ENCODE measurements at regions of chr7 and their contacts with region 1.

Region 1: GRCh38 chr7:77798394-77799077 is at the starts of genes PHTF2 and TMEM60:
- DNase-seq: peak; percentile 80 to 99 (median 89)
- ATAC-seq: peak; percentile 87
- H3K4me3 ChIP-seq: peak within 1 kb of the TSS; percentile 81
- H3K4me3 Mint-ChIP-seq: peak within 1 kb of the TSS; percentile 95
- H3K27ac ChIP-seq: peak within 1 kb of the TSS; percentile 55 to 76
- H3K27ac Mint-ChIP-seq: peak within 1 kb of the TSS; percentile 87
- H3K4me1 ChIP-seq: peaks cover 23% of the 10 kb centered on the region
- H3K4me1 Mint-ChIP-seq: peaks cover 86% of the 10 kb centered on the region
- H3K27me3 ChIP-seq: no peaks in the 10 kb centered on the region
- H3K27me3 Mint-ChIP-seq: no peaks in the 10 kb centered on the region
- CTCF ChIP-seq: peak; percentile 72
- total RNA-seq, gene PHTF2: 22.6 to 23.5 TPM
- total RNA-seq, gene TMEM60: 1.2 to 2.4 TPM

Region 2: DNA sequence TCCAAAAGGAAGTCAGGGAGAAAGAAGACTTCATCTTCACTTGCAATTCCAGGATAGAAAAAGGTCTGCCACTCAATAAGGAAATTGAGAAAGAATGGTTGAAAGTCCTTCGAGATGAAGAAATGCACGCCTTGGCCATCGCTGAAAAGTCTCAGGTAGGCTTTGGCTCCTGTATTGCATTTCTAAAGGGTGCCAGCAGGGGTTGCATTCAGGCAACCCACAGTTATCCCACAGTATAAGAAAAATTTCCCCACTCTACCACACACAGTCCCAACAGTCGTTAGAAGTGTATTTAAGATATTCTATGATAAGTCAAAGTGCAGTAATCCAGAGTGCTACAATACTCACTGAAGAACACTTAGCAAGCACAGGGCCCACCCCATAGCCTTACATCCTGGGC is 505.5 kb before region 1 on chr7:
- CTCF ChIA-PET with region 1: no interaction called
- POLR2A ChIA-PET with region 1: no interaction called
- intact Hi-C with region 1: no loop called
- DNase-seq: peak in 1 of 14 experiments; percentile 4
- ATAC-seq: no peak
- H3K4me3 ChIP-seq: no peak overlapping the region
- H3K4me3 Mint-ChIP-seq: no peak overlapping the region
- H3K27ac ChIP-seq: no peak overlapping the region
- H3K27ac Mint-ChIP-seq: no peak overlapping the region
- H3K4me1 ChIP-seq: no peaks in the 10 kb centered on the region
- H3K4me1 Mint-ChIP-seq: no peaks in the 10 kb centered on the region
- H3K27me3 ChIP-seq: no peaks in the 10 kb centered on the region
- H3K27me3 Mint-ChIP-seq: no peaks in the 10 kb centered on the region
- CTCF ChIP-seq: no peak

Region 3: GRCh38 chr7:77536413-77537135 is 262.0 kb before region 1 on chr7:
- CTCF ChIA-PET with region 1: no interaction called
- POLR2A ChIA-PET with region 1: no interaction called
- intact Hi-C with region 1: loop called (anchors 2 to 5 kb)
- DNase-seq: peak; percentile 92 to 99 (median 97)
- ATAC-seq: peak; percentile 88
- H3K4me3 ChIP-seq: peak overlapping the region; percentile 86
- H3K4me3 Mint-ChIP-seq: peak overlapping the region; percentile 95
- H3K27ac ChIP-seq: peak overlapping the region; percentile 45 to 55
- H3K27ac Mint-ChIP-seq: peak overlapping the region; percentile 83
- H3K4me1 ChIP-seq: peaks cover 19% of the 10 kb centered on the region
- H3K4me1 Mint-ChIP-seq: peaks cover 20% of the 10 kb centered on the region
- H3K27me3 ChIP-seq: no peaks in the 10 kb centered on the region
- H3K27me3 Mint-ChIP-seq: no peaks in the 10 kb centered on the region
- CTCF ChIP-seq: no peak

Region 4: GRCh38 chr7:77696198-77697028 is 102.1 kb before region 1 on chr7 and contains the start of gene RSBN1L:
- CTCF ChIA-PET with region 1: interaction called, 4 read pairs
- POLR2A ChIA-PET with region 1: interaction called, 9 read pairs
- intact Hi-C with region 1: loop called (anchors 2 kb)
- DNase-seq: peak; percentile 95 to 99 (median 98)
- ATAC-seq: peak; percentile 95
- H3K4me3 ChIP-seq: peak within 1 kb of the TSS; percentile 100
- H3K4me3 Mint-ChIP-seq: peak within 1 kb of the TSS; percentile 100
- H3K27ac ChIP-seq: peak within 1 kb of the TSS; percentile 90 to 92
- H3K27ac Mint-ChIP-seq: peak within 1 kb of the TSS; percentile 99
- H3K4me1 ChIP-seq: peaks cover 24% of the 10 kb centered on the region
- H3K4me1 Mint-ChIP-seq: peaks cover 72% of the 10 kb centered on the region
- H3K27me3 ChIP-seq: no peaks in the 10 kb centered on the region
- H3K27me3 Mint-ChIP-seq: no peaks in the 10 kb centered on the region
- CTCF ChIP-seq: peak; percentile 55
- total RNA-seq, gene RSBN1L: 9.0 to 9.6 TPM

Region 5: DNA sequence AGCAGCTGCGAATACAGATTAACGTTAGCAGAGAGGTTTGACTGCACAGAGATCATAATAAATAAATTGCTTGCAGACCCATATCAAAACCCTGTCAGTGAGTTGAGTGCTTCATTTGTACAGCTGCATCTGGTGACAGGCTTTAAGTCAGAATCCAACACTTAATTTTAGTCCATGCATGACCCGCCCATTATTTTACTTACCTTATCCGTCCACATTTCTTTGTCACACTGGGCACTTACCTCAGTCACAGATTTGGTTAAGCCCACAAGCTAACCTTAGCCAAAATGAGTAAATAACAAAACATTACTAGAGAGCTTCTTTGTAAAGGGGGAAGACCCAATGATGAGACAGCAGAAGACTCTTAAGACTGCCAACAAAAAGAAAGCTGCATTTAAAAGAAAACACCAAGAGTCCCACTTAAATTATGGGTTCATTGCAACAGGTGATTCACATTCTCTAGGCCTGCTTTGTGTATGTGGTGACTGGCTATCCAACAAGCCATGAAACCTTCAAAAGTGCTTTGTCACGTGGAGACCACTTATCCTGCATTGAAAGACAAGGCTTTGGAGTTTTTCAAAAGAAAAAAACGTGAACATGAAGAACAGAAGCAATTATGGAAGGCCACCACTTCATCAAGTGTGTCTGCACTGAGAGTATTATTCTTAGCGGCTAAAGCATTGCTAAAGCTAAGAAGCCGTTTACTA is 32.3 kb after region 1 on chr7:
- CTCF ChIA-PET with region 1: interaction called, 6 read pairs
- POLR2A ChIA-PET with region 1: interaction called, 14 read pairs
- intact Hi-C with region 1: loop called (anchors 5 kb)
- DNase-seq: no peak
- ATAC-seq: no peak
- H3K4me3 ChIP-seq: no peak overlapping the region
- H3K4me3 Mint-ChIP-seq: peak overlapping the region; percentile 77
- H3K27ac ChIP-seq: no peak overlapping the region
- H3K27ac Mint-ChIP-seq: peak overlapping the region; percentile 86
- H3K4me1 ChIP-seq: peaks cover 45% of the 10 kb centered on the region
- H3K4me1 Mint-ChIP-seq: peaks cover 66% of the 10 kb centered on the region
- H3K27me3 ChIP-seq: no peaks in the 10 kb centered on the region
- H3K27me3 Mint-ChIP-seq: no peaks in the 10 kb centered on the region
- CTCF ChIP-seq: no peak

Region 6: DNA sequence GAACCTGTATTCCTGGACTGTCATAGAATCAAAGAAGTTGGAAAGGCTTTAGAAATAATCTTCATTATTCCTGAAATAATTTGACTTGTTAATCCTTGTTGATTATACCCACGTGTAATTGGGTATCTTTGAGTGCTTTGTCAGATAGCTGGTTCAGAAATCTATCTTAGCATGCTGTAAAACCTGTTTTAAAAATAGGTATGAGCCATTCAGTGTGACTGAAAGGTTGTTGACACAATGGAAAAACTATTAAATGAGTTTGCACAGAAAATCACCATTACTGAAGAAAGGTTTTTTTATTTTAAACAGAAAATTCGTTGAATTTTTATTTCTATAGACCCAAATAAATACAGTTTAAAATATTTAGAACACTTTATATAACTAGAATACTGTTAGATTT is 38.8 kb after region 1 on chr7:
- CTCF ChIA-PET with region 1: interaction called, 4 read pairs
- POLR2A ChIA-PET with region 1: interaction called, 14 read pairs
- intact Hi-C with region 1: loop called (anchors 5 kb)
- DNase-seq: no peak
- ATAC-seq: no peak
- H3K4me3 ChIP-seq: no peak overlapping the region
- H3K4me3 Mint-ChIP-seq: no peak overlapping the region
- H3K27ac ChIP-seq: no peak overlapping the region
- H3K27ac Mint-ChIP-seq: no peak overlapping the region
- H3K4me1 ChIP-seq: peaks cover 16% of the 10 kb centered on the region
- H3K4me1 Mint-ChIP-seq: peaks cover 56% of the 10 kb centered on the region
- H3K27me3 ChIP-seq: no peaks in the 10 kb centered on the region
- H3K27me3 Mint-ChIP-seq: no peaks in the 10 kb centered on the region
- CTCF ChIP-seq: no peak

Region 7: GRCh38 chr7:77903597-77903996 is 105.1 kb after region 1 on chr7:
- CTCF ChIA-PET with region 1: interaction called, 5 read pairs
- POLR2A ChIA-PET with region 1: no interaction called
- intact Hi-C with region 1: loop called in 1 of 2 experiments (anchors 10 kb)
- DNase-seq: peak in 3 of 14 experiments; percentile 7 to 21 (median 15)
- ATAC-seq: peak; percentile 54
- H3K4me3 ChIP-seq: no peak overlapping the region
- H3K4me3 Mint-ChIP-seq: no peak overlapping the region
- H3K27ac ChIP-seq: no peak overlapping the region
- H3K27ac Mint-ChIP-seq: no peak overlapping the region
- H3K4me1 ChIP-seq: no peaks in the 10 kb centered on the region
- H3K4me1 Mint-ChIP-seq: peaks cover 11% of the 10 kb centered on the region
- H3K27me3 ChIP-seq: no peaks in the 10 kb centered on the region
- H3K27me3 Mint-ChIP-seq: no peaks in the 10 kb centered on the region
- CTCF ChIP-seq: peak; percentile 15

Region 8: DNA sequence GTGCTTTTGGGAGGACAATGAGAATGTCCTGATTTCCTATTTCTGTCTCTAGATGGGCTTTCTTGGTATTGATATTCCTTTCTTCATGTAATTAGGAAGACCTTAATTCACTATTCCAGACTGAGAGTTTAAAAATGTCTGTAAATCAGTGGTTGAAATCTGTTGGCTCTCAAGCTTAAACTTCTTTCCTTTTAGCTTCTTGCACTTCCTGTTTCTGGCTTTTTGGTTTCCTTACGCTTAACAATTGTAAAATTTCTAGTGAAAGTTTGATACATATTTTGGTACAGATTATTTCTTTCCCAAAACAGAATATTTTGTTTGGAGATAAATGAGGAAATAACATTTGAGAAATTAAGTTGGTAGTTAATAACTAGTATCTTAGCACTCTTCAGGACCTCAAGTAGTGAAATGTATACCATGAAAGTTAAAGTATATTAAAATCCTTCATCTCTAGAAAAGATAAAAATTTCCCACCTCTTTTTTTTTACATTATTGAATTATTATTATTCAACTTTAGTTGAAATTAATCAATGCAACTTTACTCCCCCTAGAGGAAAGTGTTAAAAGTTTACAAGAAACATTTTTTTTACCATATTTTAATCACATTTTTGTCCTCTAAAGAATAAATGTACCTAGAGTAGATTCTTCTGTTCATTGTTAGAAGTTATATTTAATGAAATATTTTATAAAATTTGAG is 137.3 kb after region 1 on chr7:
- CTCF ChIA-PET with region 1: interaction called, 6 read pairs
- POLR2A ChIA-PET with region 1: interaction called, 3 read pairs
- intact Hi-C with region 1: loop called in 1 of 2 experiments (anchors 10 kb)
- DNase-seq: no peak
- ATAC-seq: no peak
- H3K4me3 ChIP-seq: no peak overlapping the region
- H3K4me3 Mint-ChIP-seq: no peak overlapping the region
- H3K27ac ChIP-seq: no peak overlapping the region
- H3K27ac Mint-ChIP-seq: peak overlapping the region; percentile 29
- H3K4me1 ChIP-seq: peaks cover 4% of the 10 kb centered on the region
- H3K4me1 Mint-ChIP-seq: peaks cover 16% of the 10 kb centered on the region
- H3K27me3 ChIP-seq: no peaks in the 10 kb centered on the region
- H3K27me3 Mint-ChIP-seq: no peaks in the 10 kb centered on the region
- CTCF ChIP-seq: peak; percentile 63